IMR-90 (cell line): ENCODE measurements at regions of chr13 and their contacts with region 1.

Region 1: DNA sequence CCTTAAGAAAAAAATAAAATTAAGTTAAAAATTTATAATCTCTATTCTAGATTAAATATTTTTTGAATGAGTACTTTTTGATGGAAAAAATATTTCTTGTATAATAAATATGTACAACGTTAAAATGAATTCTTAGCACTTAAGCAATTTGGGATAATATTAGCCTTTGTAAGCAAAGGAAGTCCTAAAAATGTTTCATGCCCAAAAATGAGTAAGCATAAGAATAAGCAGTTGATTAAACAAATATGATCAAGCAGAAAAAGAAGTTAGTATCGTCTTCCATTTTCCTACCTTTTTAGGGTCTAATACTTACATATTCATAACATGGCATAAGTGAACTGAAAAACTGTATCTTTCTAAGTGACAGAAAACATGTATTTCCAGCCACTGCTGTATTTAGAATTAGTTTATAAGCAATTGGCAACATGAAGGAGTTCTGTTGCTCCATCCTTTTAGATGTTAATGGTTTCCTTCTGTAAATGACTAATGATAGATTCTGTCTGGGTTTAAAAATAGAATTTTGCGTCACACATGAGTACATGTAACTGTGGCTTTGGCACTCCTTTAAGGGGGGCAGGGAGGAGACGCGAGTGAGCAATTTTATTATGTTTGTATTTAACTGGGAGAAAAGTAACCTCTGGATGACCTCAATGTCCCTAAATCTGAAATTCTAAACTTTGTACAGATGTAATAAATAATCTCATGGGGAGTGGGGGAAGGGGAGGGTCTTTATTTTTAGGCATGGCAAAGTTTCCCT is 237.4 kb downstream of the RGCC start:
- DNase-seq: peak; percentile 95
- ATAC-seq: peak; percentile 68
- H3K4me3 ChIP-seq: no peak overlapping the region
- H3K27ac ChIP-seq: no peak overlapping the region
- H3K4me1 ChIP-seq: peaks cover 7% of the 10 kb centered on the region
- H3K27me3 ChIP-seq: no peaks in the 10 kb centered on the region
- CTCF ChIP-seq: no peak
- POLR2A ChIP-seq: 0 out of 2 replicates have a peak, but pooled peaks have one; percentile 21
- RAD21 ChIP-seq: no peak

Region 2: DNA sequence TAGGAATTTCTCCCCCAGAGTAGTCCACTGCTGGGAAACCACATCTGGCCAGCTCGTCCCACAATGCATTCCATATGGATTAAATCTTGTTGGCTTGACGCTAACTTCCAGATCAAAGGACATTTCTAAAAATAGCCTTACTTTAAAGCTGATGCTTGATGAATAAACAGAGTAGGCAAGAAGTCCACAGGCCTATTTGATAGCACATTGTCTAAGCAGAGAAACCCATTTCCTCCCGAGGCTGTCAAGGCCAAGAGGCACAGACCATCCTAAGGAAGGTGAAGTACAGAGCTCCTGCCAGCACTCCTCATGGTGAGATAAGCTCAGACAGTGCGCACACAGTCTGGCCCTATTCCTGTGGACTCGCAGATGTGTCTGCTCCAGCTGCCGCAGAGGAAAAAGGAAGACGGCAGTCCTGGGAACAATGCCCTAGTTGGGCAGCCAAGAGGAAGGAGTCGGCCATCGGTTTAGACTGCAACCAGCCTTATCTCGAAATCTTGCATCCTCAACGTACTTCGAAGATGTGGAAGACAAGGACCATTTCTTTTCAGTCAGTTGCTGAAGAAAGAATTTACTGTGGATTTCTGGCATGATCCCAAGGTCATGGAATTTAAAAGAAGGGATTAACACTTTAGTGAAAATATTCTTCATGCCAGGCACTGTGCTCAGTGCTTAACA is 80.6 kb before region 1 on chr13:
- CTCF ChIA-PET with region 1: no interaction called
- POLR2A ChIA-PET with region 1: no interaction called
- dilution Hi-C with region 1: no loop called
- in situ Hi-C with region 1: no loop called
- intact Hi-C with region 1: no loop called
- DNase-seq: peak; percentile 96
- ATAC-seq: peak; percentile 53
- H3K4me3 ChIP-seq: no peak overlapping the region
- H3K27ac ChIP-seq: peak overlapping the region; percentile 89
- H3K4me1 ChIP-seq: peaks cover 29% of the 10 kb centered on the region
- H3K27me3 ChIP-seq: no peaks in the 10 kb centered on the region
- CTCF ChIP-seq: no peak
- POLR2A ChIP-seq: no peak; the same call in 1 of the 2 replicates
- RAD21 ChIP-seq: no peak; the same call in 1 of the 2 replicates

Region 3: DNA sequence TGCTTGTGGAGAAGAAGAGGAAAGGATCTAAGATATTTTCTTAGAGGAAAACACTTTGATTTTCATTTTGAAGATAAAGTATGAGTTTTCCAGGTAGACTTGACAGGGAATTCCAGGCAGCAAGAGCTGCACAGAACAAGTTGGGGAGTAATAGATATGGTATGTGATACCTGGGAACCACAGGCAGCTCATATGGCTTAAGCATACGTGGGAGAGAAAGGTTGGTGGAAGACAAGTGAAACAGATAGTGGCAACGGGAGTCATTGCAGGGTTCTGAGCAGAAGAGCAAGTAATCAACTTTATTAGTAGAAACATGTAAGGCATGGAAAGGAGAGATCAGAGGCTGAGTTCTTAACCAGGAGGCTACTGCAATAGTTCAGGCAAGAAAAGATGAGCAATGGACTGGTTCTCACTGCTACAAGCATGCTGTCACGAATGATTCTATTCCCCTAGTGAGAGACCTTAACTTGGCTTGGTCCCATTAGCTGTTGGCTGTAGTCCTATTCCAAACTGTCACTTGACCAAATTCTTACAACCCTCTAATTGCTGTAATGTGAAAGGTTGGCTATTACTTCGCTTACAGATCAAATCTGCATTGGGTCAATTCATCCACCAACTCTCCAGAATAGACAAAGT is 48.3 kb after region 1 on chr13:
- CTCF ChIA-PET with region 1: no interaction called
- POLR2A ChIA-PET with region 1: no interaction called
- dilution Hi-C with region 1: no loop called
- in situ Hi-C with region 1: no loop called
- intact Hi-C with region 1: loop called (anchors 5 kb)
- DNase-seq: no peak
- ATAC-seq: no peak
- H3K4me3 ChIP-seq: no peak overlapping the region
- H3K27ac ChIP-seq: no peak overlapping the region
- H3K4me1 ChIP-seq: peaks cover 2% of the 10 kb centered on the region; the same call in 1 of the 2 replicates
- H3K27me3 ChIP-seq: no peaks in the 10 kb centered on the region
- CTCF ChIP-seq: no peak
- POLR2A ChIP-seq: no peak
- RAD21 ChIP-seq: no peak